ENCODE measurements at regions of chr12 and their contacts with region 1.

Region 1: DNA sequence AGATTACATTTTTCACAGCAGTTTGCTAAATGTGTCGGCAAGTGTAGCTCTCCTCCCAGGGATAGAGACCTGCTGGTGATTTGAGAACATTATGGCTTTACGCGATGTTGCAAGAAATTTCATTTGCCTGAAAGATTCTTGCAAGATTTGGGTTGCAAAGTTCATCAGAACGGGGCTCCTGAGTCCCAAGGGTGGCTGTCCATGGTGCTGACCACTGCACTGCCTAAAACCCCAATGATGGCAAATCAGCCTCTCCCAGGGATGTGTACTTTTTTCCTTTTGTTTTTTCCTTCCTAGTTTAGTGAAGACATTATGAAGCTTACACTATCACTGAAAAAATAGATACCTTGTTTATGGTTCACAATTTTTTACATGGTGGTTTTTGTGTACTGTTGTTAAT is 85.4 kb downstream of the WSCD2 start:
- DNase-seq: no peak

Region 2: GRCh38 chr12:108468201-108468968 is 253.9 kb after region 1 on chr12:
- intact Hi-C with region 1: loop called (anchors 10 kb)
- DNase-seq: no peak

Region 3: GRCh38 chr12:108507971-108508642 is 293.6 kb after region 1 on chr12:
- intact Hi-C with region 1: no loop called
- DNase-seq: no peak

Region 4: DNA sequence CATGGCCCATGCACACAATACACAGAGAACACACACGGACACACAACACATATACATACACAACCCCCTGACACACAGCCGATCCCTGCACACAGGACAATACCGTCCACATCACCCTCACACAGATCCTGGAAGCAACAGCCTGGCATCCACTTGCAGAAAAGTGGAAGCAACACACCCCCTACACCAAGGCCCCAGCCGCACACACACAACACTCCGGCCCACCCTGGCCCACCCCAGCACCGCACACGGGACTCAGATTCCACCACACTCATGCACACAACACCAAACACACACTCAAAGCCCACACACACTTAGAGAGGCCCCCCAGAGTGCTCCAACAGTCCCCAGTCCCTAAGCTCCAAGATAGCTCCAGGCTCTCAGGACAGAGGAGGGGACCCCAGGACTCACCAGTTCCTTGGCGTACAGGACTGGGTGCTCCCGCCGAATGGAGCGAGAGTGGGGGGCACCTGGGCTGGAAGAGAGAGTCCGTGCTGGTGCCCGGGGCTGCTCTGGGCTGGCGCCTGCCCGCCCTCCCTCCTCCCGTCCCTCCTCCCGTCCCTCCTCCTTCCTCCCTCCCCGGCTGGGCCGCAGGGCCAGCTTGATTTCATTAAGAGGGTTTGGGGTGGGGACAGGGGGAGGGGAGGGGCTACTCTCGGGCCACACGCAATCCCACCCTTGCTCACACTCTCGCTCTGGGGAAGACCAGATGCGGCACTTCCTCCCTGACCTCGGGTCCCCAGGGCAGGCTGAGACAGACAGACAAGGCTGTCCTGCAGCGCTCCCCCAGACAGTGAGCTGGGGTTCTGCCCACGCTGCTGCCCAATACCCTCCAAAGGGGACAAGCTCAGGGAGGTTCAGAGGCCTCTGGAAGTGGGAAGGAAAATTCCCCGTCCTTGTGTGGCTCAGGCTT is 383.3 kb after region 1 on chr12 and contains the start of gene TMEM119:
- intact Hi-C with region 1: no loop called
- DNase-seq: no peak
- total RNA-seq, gene TMEM119: 3.4 TPM

Measured in cardiac septum (tissue), 1 donor.